ENCODE measurements at regions of chr19 and their contacts with region 1.

Region 1: GRCh38 chr19:47483800-47484690 is at the start of gene KPTN:
- DNase-seq: peak; percentile 81 to 93 (median 87)
- ATAC-seq: peak; percentile 86 to 89
- H3K4me3 Mint-ChIP-seq: peak within 1 kb of the TSS; percentile 93 to 99 (median 97)
- H3K27ac Mint-ChIP-seq: peak within 1 kb of the TSS; percentile 97 to 99 (median 98)
- H3K4me1 Mint-ChIP-seq: peaks cover 22 to 55% (median 46%) of the 10 kb centered on the region in 4 donors
- H3K27me3 Mint-ChIP-seq: no peaks in the 10 kb centered on the region
- polyA plus RNA-seq, gene KPTN: 5.8 to 8.0 (median 7.6) TPM

Region 2: DNA sequence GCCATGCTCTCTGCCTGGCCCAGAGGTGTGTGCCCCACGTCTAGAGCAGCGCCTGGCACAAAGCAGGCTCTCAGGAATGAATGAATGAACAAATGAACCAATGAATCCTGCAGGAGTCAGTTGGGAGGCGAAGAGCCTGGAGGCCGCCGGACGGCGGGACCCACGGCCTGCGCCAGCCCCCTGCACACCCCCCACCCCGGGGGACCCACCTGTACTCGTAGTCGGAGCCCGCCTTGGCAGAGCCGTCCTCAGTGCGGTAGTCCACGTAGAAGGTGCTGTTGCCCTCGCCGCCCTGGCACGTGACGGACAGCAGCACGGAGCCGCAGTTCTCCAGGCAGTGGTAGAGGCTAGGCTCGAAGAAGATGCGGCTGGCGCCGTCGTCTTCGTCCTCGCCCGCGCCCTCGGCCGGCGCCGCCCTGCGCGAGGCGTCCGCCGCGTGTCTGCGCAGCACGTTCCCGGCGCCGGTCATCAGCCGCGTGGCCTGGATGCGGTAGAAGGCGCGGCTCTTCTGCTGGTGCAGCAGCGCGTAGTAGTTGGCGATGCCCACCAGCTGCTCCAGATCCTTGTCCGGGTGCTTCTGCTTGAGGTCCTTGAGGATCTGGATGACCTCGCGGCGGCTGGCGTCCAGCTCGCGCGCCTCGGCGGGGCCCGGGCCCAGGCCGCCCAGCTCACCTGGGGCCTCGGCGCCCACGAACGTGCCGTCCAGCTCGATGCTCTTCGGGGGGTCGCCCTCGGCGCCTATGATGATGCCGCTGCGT is 27.1 kb before region 1 on chr19:
- POLR2A ChIA-PET with region 1: no interaction called
- DNase-seq: no peak
- ATAC-seq: no peak
- H3K4me3 Mint-ChIP-seq: peak overlapping the region in 1 of 10 donors; percentile 41
- H3K27ac Mint-ChIP-seq: no peak overlapping the region
- H3K4me1 Mint-ChIP-seq: peaks cover 0 to 4% (median 1%) of the 10 kb centered on the region in 4 donors
- H3K27me3 Mint-ChIP-seq: peaks cover 17 to 36% (median 25%) of the 10 kb centered on the region in 5 donors

Region 3: DNA sequence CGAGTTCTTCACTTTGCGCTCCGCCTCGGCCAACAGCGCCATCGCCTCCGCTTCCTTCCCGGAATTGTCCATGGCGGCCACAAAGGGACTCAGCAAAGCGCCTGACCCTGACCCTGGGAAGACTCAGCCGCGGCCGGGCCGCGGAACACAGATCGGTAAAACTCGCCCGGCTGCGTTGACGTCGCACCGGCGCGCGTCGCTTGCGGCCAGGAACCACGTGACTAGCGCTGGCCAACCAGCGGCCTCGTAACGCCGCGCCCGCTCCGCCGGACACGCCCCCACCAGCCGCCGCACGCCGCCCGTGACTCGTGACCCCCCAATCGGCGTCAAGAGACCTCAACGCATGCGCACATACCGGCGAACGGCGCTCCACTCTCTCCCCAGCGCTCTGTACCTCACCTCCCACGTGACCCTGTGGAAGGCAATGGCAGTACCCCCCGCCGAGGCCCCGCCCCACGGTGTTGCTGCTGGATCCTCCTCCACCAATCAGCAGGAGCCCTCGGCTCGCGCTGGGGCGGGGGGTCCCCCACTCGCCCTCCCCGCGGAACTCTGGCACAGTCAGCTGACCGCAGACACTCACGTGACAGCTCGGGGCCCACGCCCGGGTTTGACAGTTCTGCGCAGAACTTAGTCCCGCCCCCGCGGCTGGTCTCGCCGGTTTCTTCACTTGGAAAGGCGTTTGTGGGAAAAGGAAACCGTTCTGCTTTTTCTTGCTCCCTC is 31.0 kb after region 1 on chr19 and contains the start of gene NAPA:
- POLR2A ChIA-PET with region 1: interaction called, 19 read pairs
- DNase-seq: peak; percentile 99 to 100 (median 100)
- ATAC-seq: peak; percentile 90 to 91
- H3K4me3 Mint-ChIP-seq: peak within 1 kb of the TSS; percentile 95 to 100 (median 98)
- H3K27ac Mint-ChIP-seq: peak within 1 kb of the TSS; percentile 95 to 100 (median 98)
- H3K4me1 Mint-ChIP-seq: peaks cover 54 to 99% (median 95%) of the 10 kb centered on the region in 4 donors
- H3K27me3 Mint-ChIP-seq: no peaks in the 10 kb centered on the region
- polyA plus RNA-seq, gene NAPA: 88.7 to 116 (median 89.6) TPM